Activated T-helper 1 cell treated with anti-CD3 and anti-CD28 coated beads, Interleukin-12 subunit alpha, Interleukin-12 subunit beta, Interleukin-2, Interleukin-4 antibody, amounts not matched to agents 30 ng/mL and 10 ng/mL and 1 ng/mL, durations not matched to agents 14 hours and 24 hours and 36 hours (primary cell): ENCODE measurements at regions of chr20 and their contacts with region 1.

Region 1: GRCh38 chr20:33666293-33667244 is at the start of gene ACTL10:
- DNase-seq: peak; percentile 78
- H3K4me3 Mint-ChIP-seq: peak within 1 kb of the TSS; percentile 88
- H3K27ac Mint-ChIP-seq: peak within 1 kb of the TSS; percentile 86
- H3K4me1 Mint-ChIP-seq: peaks cover 43% of the 10 kb centered on the region
- H3K27me3 Mint-ChIP-seq: no peaks in the 10 kb centered on the region
- total RNA-seq, gene ACTL10: 3.7 and 4.2 TPM in 2 replicates

Region 2: DNA sequence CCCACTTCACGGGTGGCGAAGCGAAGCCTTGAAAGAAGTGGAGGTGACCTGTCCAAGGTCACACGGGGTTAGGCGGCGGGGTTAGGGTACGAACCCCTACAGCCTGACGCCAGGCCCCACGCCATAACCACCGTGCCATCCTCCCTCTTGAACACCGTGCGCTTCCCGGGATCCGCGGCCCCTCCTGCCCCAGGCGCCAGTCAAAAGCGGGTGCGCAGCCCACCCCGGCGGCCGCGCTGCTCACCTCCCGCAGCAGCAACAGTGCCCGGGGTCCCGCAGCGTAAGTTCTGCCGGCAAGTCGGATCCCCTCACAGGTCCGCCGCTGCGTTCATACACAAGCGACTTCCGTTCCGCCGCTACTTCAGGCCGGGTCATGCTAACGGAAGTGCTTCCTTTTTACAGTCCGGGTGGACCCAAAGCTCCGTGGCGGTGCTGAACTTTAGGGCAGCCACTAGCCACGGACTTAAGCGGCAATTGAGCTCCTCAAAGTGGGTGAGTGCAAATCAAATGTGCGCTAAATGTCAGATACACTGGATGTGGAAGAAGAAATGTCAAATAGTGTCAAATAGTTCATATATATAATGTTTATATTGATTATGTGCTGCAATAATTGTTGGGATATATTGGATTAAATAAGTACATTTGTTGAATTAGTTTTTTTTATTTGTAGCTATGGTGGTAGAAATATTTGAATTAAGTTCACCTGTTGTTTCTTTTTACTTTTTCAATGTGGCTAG is 265.2 kb before region 1 on chr20 and contains the start of gene CDK5RAP1:
- intact Hi-C with region 1: loop called (anchors 1 kb)
- DNase-seq: peak; percentile 80
- H3K4me3 Mint-ChIP-seq: peak within 1 kb of the TSS; percentile 98
- H3K27ac Mint-ChIP-seq: peak within 1 kb of the TSS; percentile 91
- H3K4me1 Mint-ChIP-seq: peaks cover 30% of the 10 kb centered on the region
- H3K27me3 Mint-ChIP-seq: no peaks in the 10 kb centered on the region
- total RNA-seq, gene CDK5RAP1: 46.0 and 49.1 TPM in 2 replicates

Region 3: DNA sequence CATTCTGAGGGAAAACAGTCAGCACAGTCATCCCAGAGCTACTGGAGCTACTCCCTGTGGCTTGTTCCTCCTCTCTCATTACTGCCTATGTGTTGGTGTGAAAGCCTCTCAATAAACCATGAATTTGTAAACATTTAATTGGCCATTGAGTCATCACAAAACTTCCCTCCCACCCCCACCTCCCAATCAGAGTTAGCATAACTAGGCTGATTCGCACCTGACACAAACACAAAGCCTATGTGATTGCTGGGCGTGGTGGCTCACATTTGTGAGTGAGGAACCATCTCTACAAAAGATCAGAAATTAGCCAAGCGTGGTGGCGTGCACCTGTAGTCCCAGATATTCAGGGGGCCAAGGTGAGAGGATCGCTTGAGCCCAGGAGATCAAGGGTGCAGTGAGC is 205.9 kb before region 1 on chr20:
- intact Hi-C with region 1: loop called (anchors 1 kb)
- DNase-seq: no peak
- H3K4me3 Mint-ChIP-seq: no peak overlapping the region
- H3K27ac Mint-ChIP-seq: no peak overlapping the region
- H3K4me1 Mint-ChIP-seq: no peaks in the 10 kb centered on the region
- H3K27me3 Mint-ChIP-seq: no peaks in the 10 kb centered on the region

Region 4: DNA sequence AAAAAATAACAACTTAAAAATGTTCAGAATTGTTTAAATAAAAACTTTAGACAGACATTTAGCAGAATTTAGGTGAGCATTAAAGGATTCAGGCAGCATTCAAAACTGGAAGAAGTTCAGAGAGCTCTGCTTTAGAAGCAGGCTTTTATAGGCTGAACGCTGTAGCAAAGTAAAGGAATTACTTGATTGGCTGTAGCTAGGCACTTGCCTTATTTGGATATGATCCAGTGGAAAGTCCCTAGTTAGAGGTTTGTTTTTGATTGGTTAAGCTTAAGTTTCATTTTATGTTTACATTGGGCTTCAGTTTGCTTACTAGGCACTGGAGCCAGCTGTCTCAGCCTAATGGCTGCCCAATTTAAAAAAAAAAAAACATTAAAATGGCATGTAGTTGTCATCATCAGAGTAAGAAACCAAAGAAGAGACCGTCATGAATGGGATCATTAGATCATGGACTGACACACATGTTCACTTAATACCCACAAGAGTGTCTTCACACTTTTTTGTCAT is 111.6 kb before region 1 on chr20:
- intact Hi-C with region 1: loop called (anchors 1 kb)
- DNase-seq: peak; percentile 47
- H3K4me3 Mint-ChIP-seq: peak overlapping the region; percentile 20
- H3K27ac Mint-ChIP-seq: peak overlapping the region; percentile 85
- H3K4me1 Mint-ChIP-seq: peaks cover 15% of the 10 kb centered on the region
- H3K27me3 Mint-ChIP-seq: no peaks in the 10 kb centered on the region

Region 5: DNA sequence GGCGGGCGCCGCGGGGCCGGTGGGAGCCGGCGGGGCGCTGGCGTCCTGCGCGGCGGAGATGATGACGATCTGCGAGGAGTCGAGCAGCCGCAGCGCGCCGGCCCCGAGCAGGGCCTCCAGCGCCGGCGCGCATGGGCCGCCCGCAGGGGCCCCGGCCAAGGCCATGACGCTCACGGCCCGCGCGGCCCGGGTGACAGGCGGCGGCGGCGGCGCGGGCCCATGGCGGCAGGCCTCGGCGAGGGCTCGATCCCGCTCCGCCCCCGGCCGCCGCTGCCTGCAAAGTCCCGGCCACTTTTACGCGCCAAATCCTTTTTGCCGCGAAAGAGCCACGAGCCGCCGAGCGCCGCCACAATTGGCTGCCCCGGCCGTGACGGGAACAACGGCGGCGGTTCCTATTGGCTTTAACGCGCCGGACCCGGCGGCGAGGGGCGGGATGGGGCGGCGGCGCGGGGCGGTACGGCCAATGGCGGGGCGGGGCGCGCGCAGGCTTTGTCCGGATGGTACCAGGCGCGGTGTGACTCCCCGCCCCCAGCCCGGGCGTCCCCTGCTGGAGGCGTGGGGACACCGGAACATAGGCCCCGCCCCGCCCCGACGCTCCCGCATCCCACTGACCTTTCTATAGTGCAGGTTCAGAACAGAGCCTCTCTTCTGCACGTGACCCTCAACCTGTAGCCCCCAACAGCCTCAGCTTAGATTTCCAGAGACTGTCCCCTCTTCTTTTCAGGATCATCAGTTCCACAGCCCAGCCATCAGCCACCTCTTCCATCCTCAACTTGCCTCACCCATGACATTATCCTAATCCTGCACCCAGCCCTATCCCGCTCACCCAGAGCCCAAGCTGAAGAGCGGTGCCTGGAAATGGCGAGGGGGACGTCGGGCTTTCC is 19.8 kb after region 1 on chr20 and contains the start of gene E2F1:
- intact Hi-C with region 1: loop called (anchors 1 kb)
- DNase-seq: peak; percentile 97
- H3K4me3 Mint-ChIP-seq: peak within 1 kb of the TSS; percentile 92
- H3K27ac Mint-ChIP-seq: peak within 1 kb of the TSS; percentile 89
- H3K4me1 Mint-ChIP-seq: peaks cover 71% of the 10 kb centered on the region
- H3K27me3 Mint-ChIP-seq: no peaks in the 10 kb centered on the region
- total RNA-seq, gene E2F1: 77.5 and 80.6 TPM in 2 replicates

Region 6: GRCh38 chr20:33731693-33732165 is 65.2 kb after region 1 on chr20 and contains the start of gene ZNF341:
- intact Hi-C with region 1: loop called (anchors 1 kb)
- DNase-seq: peak; percentile 87
- H3K4me3 Mint-ChIP-seq: peak within 1 kb of the TSS; percentile 89
- H3K27ac Mint-ChIP-seq: peak within 1 kb of the TSS; percentile 97
- H3K4me1 Mint-ChIP-seq: peaks cover 27% of the 10 kb centered on the region
- H3K27me3 Mint-ChIP-seq: no peaks in the 10 kb centered on the region
- total RNA-seq, gene ZNF341: 6.7 and 6.8 TPM in 2 replicates

Region 7: DNA sequence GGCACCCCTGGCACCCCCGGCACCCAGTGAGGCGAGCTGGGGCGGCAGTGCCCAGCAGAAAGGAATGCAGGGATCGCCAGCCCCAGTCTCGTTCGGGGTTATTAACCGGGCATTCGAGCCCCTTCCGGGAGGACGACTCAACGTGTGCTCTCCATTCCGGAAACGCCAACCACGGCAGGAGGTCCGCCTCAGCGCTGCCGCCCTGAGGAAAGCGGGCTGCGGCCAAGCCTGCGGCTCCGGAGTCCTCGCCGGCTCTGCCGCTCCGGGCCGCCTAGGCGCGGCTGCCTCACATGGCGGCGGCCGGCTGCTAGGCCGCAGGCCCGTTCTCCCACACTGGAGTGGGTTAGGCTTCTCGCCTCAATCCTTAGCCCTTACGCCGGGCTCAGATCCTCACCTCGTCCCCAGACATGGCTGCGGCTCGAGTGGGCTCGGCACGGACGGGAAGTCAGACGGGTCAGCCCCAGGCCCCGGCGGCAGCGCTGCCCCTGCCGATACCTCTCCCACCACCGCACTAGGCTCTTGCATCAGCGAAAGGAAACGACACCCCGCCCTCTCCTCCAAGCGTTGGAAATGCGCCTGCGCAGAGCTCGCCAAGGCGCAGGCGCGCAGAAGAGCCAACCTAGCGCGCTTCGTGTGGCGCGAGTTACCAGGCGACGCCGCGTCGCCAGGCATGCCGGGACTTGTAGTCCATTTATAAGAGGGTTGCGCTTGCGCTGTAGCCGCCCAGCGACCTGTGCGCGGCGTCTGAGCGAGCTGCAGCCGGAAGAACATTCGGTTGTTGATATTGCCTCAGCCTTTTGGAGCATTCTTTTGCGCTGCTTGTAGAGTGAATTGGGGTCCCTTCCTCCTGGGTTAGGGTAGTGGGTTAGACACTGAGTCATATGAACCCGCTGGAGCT is 445.4 kb after region 1 on chr20 and contains the start of gene EIF2S2:
- intact Hi-C with region 1: loop called (anchors 5 kb)
- DNase-seq: peak; percentile 96
- H3K4me3 Mint-ChIP-seq: peak within 1 kb of the TSS; percentile 88
- H3K27ac Mint-ChIP-seq: peak within 1 kb of the TSS; percentile 98
- H3K4me1 Mint-ChIP-seq: peaks cover 46% of the 10 kb centered on the region
- H3K27me3 Mint-ChIP-seq: peaks cover 1% of the 10 kb centered on the region
- total RNA-seq, gene EIF2S2: 99.8 and 105 TPM in 2 replicates